SK-N-SH (cell line): ENCODE measurements at regions of chr2 and their contacts with region 1.

Region 1: DNA sequence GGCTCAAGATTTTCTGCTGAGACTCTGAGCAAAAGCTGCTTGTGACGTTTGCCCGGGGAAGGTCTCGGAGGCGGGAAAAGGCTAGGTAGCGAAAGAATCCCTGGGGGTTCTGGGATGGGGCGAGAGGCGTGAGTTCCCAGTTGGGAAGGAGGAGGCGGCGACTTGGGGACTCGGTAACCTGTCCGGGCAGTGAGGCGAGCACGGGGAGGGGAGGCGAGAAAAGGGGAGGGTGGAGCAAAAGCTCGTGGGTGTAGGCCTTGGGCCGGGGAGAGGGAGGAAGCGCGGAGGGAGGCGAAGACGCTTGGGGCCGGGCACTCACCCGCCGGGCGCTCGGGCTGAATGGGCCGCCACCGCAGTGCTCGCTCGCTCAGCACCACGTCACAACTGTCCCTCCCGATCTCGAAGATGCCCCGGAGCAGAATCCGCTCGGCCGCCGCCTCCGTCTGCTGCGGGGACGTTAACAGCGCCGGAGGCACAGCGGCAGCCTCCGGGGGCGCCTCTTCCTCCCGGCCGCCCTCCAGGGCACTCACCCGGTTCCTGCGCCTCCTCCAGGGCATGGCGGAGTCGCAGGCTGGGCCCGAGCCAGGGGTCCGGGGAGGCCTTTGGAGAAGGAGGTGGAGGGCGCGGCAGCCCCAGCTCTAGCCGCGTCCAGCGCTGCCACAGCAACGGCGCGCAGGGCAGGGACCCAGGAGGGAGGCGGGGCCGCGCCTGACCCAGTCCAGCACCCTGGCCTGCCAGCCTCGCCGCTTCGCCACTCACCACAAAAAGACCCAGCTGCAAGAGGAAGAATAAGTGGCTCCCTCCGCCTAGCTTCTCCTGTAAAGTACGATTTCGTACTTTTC is at the start of gene CERKL:
- DNase-seq: peak; percentile 87
- H3K4me3 ChIP-seq: peak within 1 kb of the TSS; percentile 46 to 55
- H3K27ac ChIP-seq: no peak within 1 kb of the TSS
- H3K4me1 ChIP-seq: peaks cover 0 to 8% of the 10 kb centered on the region in 2 experiments; a peak in 1 of 4 replicates
- H3K27me3 ChIP-seq: no peaks in the 10 kb centered on the region
- CTCF ChIP-seq: no peak
- EP300 ChIP-seq: no peak
- RAD21 ChIP-seq: no peak
- polyA plus RNA-seq, gene CERKL: 0.05 and 0.07 TPM in 2 replicates

Region 2: GRCh38 chr2:181528441-181528840 is 128.2 kb before region 1 on chr2:
- CTCF ChIA-PET with region 1: no interaction called
- POLR2A ChIA-PET with region 1: no interaction called
- DNase-seq: peak; percentile 37
- H3K4me3 ChIP-seq: no peak overlapping the region
- H3K27ac ChIP-seq: peak overlapping the region in 1 of 2 experiments; percentile 86; a peak in 2 of 4 replicates
- H3K4me1 ChIP-seq: peaks cover 0 to 14% of the 10 kb centered on the region in 2 experiments; a peak in 2 of 4 replicates
- H3K27me3 ChIP-seq: no peaks in the 10 kb centered on the region
- CTCF ChIP-seq: no peak
- EP300 ChIP-seq: peak in 1 of 2 experiments; percentile 93; a peak in 2 of 4 replicates
- RAD21 ChIP-seq: peak; percentile 14

Region 3: GRCh38 chr2:181667234-181667633 is 10.6 kb after region 1 on chr2:
- CTCF ChIA-PET with region 1: interaction called, 11 read pairs
- POLR2A ChIA-PET with region 1: no interaction called
- DNase-seq: no peak
- H3K4me3 ChIP-seq: no peak overlapping the region
- H3K27ac ChIP-seq: no peak overlapping the region
- H3K4me1 ChIP-seq: no peaks in the 10 kb centered on the region; a peak in 1 of 4 replicates
- H3K27me3 ChIP-seq: no peaks in the 10 kb centered on the region; the same call in 1 of the 2 replicates
- CTCF ChIP-seq: no peak
- EP300 ChIP-seq: no peak
- RAD21 ChIP-seq: no peak

Region 4: GRCh38 chr2:181677912-181678586 is 21.4 kb after region 1 on chr2:
- CTCF ChIA-PET with region 1: no interaction called
- POLR2A ChIA-PET with region 1: no interaction called
- DNase-seq: no peak
- H3K4me3 ChIP-seq: no peak overlapping the region
- H3K27ac ChIP-seq: no peak overlapping the region
- H3K4me1 ChIP-seq: peaks cover 0 to 8% of the 10 kb centered on the region in 2 experiments; a peak in 2 of 4 replicates
- H3K27me3 ChIP-seq: no peaks in the 10 kb centered on the region
- CTCF ChIP-seq: no peak
- EP300 ChIP-seq: no peak
- RAD21 ChIP-seq: no peak